T-cell (primary cell): ENCODE measurements at regions of chr2 and their contacts with region 1.

Region 1: DNA sequence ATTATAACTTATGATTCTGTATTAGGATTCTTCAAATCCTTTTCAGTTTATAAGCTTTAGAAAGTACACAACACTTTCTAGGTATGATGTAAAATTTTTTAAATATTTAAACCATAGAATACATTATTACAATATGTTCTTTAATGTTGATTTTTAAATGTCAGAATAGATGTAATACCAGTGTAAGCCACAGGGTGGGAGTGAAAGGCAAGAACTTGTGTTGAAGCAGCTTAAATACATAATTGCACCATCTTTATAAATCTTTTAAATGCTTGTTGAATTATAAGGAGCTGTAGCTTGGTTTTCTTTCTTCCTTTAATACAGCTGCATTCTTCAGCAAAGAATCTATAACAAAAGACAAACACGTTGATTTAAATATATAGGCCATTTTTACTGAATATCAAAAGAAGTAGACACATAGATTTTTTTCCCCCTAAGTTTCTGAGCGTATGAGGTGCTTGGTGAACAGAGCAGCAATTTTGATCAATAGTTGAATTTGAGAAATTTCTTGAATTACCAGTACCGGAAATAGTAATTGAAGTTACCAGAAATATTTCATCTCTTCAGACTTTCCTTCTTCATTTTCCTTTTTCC is 63.0 kb downstream of the TANK start:
- DNase-seq: peak in 5 of 35 experiments; percentile 20 to 71 (median 32)
- ATAC-seq: no peak
- H3K4me3 ChIP-seq: no peak overlapping the region
- H3K4me3 Mint-ChIP-seq: no peak overlapping the region
- H3K27ac ChIP-seq: no peak overlapping the region
- H3K27ac Mint-ChIP-seq: no peak overlapping the region
- H3K4me1 ChIP-seq: no peaks in the 10 kb centered on the region
- H3K4me1 Mint-ChIP-seq: peaks cover 0 to 6% (median under 1%) of the 10 kb centered on the region in 3 donors
- H3K27me3 ChIP-seq: no peaks in the 10 kb centered on the region
- H3K27me3 Mint-ChIP-seq: no peaks in the 10 kb centered on the region

Region 2: DNA sequence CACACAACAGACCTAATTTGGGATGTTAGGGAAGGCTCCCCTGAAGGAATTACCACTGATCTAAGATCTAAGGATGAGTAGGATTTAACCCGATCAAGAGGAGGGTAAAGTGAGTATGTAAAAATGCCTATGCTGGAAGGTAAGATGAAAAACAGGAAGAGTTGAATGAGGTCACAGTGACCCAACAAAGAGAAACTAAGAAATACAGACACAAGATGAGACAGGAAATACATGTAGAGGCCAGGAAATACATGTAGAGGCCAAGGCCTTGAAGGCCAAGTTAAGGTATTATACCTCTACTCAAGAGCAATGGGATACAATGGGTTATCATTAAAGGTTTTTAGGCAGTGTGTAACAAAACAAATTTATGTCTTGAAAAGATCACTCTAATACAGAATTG is 194.7 kb before region 1 on chr2:
- CTCF ChIA-PET with region 1: no interaction called
- POLR2A ChIA-PET with region 1: no interaction called
- DNase-seq: no peak
- ATAC-seq: no peak
- H3K4me3 ChIP-seq: no peak overlapping the region
- H3K4me3 Mint-ChIP-seq: no peak overlapping the region
- H3K27ac ChIP-seq: no peak overlapping the region
- H3K27ac Mint-ChIP-seq: no peak overlapping the region
- H3K4me1 ChIP-seq: no peaks in the 10 kb centered on the region
- H3K4me1 Mint-ChIP-seq: peaks cover 4 to 6% (median 4%) of the 10 kb centered on the region in 3 donors
- H3K27me3 ChIP-seq: peaks cover 0 to 3% of the 10 kb centered on the region in 2 experiments
- H3K27me3 Mint-ChIP-seq: peaks cover 0 to 3% of the 10 kb centered on the region in 2 donors

Region 3: DNA sequence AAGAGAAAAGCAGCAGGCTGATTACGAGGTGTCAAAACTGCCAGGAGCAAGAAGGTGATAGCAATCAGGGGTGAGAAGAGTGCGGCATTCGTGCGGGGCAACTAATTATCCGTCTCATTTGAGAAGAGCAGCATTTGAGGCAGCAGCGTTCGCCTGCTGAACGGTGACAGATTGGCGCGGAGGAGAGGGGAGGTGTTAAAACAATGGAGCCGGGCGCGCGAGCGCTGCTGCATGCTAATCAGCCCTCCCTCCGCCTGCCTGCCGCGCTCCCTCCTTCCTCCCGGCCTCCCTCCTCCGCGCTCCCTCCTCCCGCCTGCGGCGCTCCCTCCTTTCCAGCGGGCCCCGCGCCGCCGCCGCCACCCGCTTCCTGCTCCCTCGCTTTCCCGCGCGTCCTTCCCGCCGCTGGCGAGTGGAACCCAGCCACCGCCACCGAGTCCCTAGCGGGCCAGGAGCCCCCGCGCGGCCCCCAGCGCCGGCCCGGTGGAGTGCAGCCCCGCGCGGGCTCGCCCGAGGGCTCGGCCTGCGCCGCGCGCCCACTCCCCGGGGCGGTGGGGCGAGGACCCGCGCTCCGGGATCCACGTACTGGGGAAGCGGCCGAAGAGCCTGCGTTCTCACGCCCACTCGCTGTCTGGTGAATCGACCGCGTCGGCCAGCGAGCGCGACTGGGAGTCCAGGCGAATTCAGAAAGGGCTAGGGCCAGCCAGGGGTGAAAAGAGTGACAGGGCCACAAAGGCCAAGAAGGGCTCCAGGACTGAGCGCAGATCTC is 15.5 kb after region 1 on chr2:
- CTCF ChIA-PET with region 1: interaction called, 6 to 18 read pairs
- POLR2A ChIA-PET with region 1: interaction called in 1 of 2 experiments, 3 read pairs
- DNase-seq: peak in 34 of 35 experiments; percentile 33 to 71 (median 55)
- ATAC-seq: peak; percentile 70 to 77 (median 73)
- H3K4me3 ChIP-seq: peak overlapping the region; percentile 62 to 77
- H3K4me3 Mint-ChIP-seq: peak overlapping the region; percentile 88 to 92 (median 91)
- H3K27ac ChIP-seq: peak overlapping the region; percentile 39
- H3K27ac Mint-ChIP-seq: peak overlapping the region; percentile 75 to 84
- H3K4me1 ChIP-seq: peaks cover 13 to 26% of the 10 kb centered on the region in 2 experiments
- H3K4me1 Mint-ChIP-seq: peaks cover 20 to 61% (median 56%) of the 10 kb centered on the region in 3 donors
- H3K27me3 ChIP-seq: no peaks in the 10 kb centered on the region
- H3K27me3 Mint-ChIP-seq: no peaks in the 10 kb centered on the region

Region 4: DNA sequence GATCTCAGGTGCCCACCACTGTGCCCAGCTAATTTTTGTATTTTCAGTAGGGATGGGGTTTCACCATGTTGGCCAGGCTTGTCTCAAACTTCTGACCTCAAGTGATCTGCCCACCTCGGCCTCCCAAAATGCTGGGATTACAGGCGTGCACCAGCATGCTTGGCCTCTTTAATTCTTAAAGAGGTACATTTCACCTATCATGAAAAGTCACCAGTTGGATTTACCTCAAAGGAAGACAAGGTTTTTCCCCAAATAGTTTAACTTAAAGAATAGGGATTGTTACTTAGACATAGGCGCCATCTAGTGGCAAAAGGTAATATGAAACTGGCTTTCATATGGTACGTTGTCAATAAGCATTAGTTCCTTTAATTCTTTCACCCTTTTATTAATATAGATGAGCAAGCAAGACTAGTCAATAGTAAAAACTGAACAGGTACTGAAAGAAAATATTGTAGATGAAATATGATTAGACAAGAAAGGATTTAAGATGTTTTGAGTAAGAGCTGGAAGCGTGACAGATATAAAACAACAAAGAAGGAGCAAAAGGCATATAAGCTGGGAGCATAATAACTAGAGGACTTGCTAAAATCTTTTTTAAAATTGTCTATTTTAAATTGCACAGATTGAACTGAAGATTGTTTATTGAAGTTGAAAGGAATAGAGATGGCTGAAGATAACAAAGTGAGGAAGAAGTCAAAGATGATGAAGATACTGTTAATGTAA is 50.0 kb after region 1 on chr2:
- CTCF ChIA-PET with region 1: interaction called, 31 to 45 read pairs
- POLR2A ChIA-PET with region 1: interaction called in 1 of 2 experiments, 3 read pairs
- DNase-seq: peak in 9 of 35 experiments; percentile 4 to 81 (median 22)
- ATAC-seq: peak in 2 of 4 experiments; percentile 50 to 52
- H3K4me3 ChIP-seq: no peak overlapping the region
- H3K4me3 Mint-ChIP-seq: no peak overlapping the region
- H3K27ac ChIP-seq: no peak overlapping the region
- H3K27ac Mint-ChIP-seq: no peak overlapping the region
- H3K4me1 ChIP-seq: no peaks in the 10 kb centered on the region
- H3K4me1 Mint-ChIP-seq: peaks cover 2 to 5% (median 3%) of the 10 kb centered on the region in 3 donors
- H3K27me3 ChIP-seq: peaks cover 0 to 12% of the 10 kb centered on the region in 2 experiments
- H3K27me3 Mint-ChIP-seq: peaks cover 4 to 6% of the 10 kb centered on the region in 2 donors